ENCODE measurements at regions of chr17 and their contacts with region 1.

Region 1: DNA sequence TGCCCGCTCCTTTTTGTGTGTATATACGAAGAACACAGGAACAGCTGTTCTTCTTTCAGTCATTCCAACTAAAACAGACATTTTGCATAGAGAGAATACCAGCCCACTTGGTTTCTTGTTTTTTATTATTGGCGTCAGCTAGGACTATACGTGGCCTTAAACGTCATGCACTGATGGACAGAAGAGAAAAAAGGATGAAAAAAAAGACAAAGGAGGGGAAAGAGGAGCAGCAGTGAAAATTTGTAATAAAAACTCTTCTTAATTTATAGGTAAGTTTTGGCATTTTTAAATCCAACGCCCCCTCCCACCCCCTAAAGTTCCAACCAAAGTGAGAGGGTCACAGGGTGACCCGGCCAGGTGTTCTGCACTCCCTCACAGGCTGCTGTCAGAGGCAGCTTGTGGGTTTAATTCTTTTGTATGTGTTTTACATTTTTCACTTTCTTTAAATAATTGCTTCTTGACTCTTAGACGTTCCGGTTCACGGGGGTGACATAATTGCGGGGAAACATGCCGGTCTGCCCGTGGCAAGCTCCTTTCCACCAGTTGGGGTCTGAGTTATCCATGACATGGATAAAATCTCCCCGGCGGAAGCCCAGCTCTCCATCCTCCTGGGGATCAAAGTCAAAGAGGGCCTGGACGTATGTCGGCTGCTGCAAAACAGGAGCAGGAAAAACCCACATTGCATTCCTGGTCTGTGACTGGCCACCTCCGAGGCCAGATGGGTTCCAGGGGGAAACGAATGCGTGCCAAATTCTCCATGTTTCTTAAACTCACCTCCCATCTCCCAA is 30.9 kb upstream of the SLC25A19 start:
- DNase-seq: no peak
- ATAC-seq: peak; percentile 67
- H3K4me3 ChIP-seq: peak overlapping the region; percentile 59; the same call in 1 of the 2 replicates
- H3K27ac ChIP-seq: peak overlapping the region; percentile 85
- H3K4me1 ChIP-seq: peaks cover 76% of the 10 kb centered on the region
- H3K27me3 ChIP-seq: no peaks in the 10 kb centered on the region
- CTCF ChIP-seq: no peak
- EP300 ChIP-seq: peak; percentile 63 to 75; a peak in 3 of 4 replicates
- POLR2A ChIP-seq: no peak; the same call in 1 of the 2 replicates
- RAD21 ChIP-seq: no peak; the same call in 1 of the 2 replicates

Region 2: DNA sequence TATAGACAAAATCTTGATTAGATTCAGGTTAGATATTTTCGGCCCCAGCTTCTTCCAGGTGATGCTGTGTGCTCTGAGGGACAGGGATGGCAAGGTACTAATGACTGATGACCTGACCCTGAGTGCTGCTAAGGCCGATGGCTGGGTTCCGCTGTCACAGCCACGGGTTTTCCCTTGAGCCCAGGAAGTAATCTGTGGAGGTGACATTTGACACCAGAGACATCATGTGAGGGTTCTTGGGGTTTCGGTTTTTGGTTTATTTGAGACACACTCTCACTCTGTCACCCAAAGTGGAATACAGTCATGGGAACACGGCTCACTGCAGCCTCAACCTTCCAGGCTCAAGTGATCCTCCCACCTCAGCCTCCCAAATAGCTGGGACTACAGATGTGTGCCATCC is 374.6 kb before region 1 on chr17:
- CTCF ChIA-PET with region 1: no interaction called
- POLR2A ChIA-PET with region 1: no interaction called
- RAD21 ChIA-PET with region 1: no interaction called
- SMC1A ChIA-PET with region 1: no interaction called
- in situ Hi-C with region 1: no loop called
- intact Hi-C with region 1: no loop called
- DNase-seq: peak; percentile 48
- ATAC-seq: peak; percentile 97
- H3K4me3 ChIP-seq: peak overlapping the region; percentile 12; the same call in 1 of the 2 replicates
- H3K27ac ChIP-seq: no peak overlapping the region
- H3K4me1 ChIP-seq: peaks cover 6% of the 10 kb centered on the region; the same call in 1 of the 2 replicates
- H3K27me3 ChIP-seq: no peaks in the 10 kb centered on the region; a peak in 1 of 4 replicates
- CTCF ChIP-seq: no peak
- EP300 ChIP-seq: no peak
- POLR2A ChIP-seq: peak; percentile 52; the same call in 1 of the 2 replicates
- RAD21 ChIP-seq: no peak

Region 3: DNA sequence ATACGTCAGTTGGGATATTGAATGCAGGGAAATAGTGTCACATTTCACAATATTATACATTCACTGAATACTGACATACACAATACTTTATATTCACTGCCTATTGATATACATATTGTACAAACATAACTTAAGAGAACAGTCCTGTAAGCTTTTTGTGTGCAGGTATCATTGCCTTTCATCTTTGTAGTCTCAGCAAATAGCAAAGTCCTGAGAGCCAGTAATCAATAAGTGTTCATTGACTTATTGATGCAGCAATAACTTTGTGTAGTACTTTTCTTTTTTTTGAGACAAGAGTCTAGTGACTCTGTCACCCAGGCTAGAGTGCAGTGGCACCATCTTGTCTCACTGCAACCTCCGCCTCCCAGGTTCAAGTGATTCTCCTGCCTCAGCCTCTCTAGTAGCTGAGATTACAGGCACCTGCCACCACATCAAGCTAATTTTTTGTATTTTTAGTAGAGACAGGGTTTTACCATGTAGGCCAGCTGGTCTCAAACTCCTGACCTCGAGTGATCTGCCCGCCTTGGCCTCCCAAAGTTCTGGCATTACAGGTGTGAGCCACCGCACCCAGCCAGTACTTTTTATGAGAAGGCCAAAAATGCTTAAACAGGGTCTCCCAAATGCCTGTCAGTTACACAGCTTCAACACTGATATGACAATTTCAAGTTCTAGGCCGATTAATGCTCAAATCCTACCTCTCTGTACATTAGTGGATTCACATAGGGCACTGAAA is 120.0 kb before region 1 on chr17:
- CTCF ChIA-PET with region 1: no interaction called
- POLR2A ChIA-PET with region 1: no interaction called
- RAD21 ChIA-PET with region 1: no interaction called
- SMC1A ChIA-PET with region 1: no interaction called
- in situ Hi-C with region 1: no loop called
- intact Hi-C with region 1: no loop called
- DNase-seq: no peak
- ATAC-seq: no peak
- H3K4me3 ChIP-seq: no peak overlapping the region
- H3K27ac ChIP-seq: no peak overlapping the region
- H3K4me1 ChIP-seq: no peaks in the 10 kb centered on the region; the same call in 1 of the 2 replicates
- H3K27me3 ChIP-seq: no peaks in the 10 kb centered on the region
- CTCF ChIP-seq: no peak
- EP300 ChIP-seq: no peak
- POLR2A ChIP-seq: no peak
- RAD21 ChIP-seq: no peak

Region 4: DNA sequence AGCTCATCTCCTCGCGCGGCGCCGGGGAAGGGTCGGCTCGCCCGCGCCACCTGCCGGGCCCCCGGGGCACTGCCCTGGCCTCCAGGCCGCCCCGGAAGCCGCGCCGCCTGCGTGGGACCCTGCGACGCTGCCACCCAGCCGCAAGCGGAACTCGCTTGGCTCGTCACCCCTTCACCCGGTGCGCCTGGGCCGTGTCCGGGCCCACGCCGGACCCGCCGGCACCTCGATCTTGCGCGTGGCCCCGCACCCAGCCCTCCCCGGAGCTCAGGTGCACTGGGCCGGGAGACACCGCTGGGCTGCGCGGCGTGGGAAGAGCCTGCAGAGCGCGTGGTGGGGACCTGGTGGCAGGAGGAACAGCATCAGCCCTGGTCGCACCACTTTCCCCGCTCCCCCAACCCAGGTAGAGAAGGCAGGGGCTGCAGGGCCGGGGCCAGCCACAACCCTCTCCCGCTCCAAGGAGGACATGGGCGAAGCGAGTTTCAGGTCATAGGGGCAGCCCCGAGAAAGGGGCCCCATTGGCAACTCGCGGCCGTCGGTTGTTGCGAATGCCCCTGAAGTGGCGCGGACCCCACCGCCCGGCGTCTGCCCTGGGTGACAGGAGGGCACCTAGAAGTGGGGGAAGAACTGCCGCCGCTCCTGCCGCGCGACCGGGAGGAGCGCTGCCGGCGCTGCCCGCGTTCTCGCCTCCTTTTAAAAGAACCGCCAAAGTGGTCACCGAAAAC is 48.7 kb before region 1 on chr17:
- CTCF ChIA-PET with region 1: interaction called, 14 read pairs
- POLR2A ChIA-PET with region 1: interaction called, 4 read pairs
- RAD21 ChIA-PET with region 1: interaction called, 15 read pairs
- SMC1A ChIA-PET with region 1: interaction called, 7 read pairs
- in situ Hi-C with region 1: no loop called
- intact Hi-C with region 1: no loop called
- DNase-seq: no peak
- ATAC-seq: peak; percentile 82
- H3K4me3 ChIP-seq: peak overlapping the region; percentile 70
- H3K27ac ChIP-seq: peak overlapping the region; percentile 91
- H3K4me1 ChIP-seq: peaks cover 24% of the 10 kb centered on the region
- H3K27me3 ChIP-seq: no peaks in the 10 kb centered on the region
- CTCF ChIP-seq: peak; percentile 66 to 87 (median 79); a peak in 4 of 6 replicates
- EP300 ChIP-seq: no peak
- POLR2A ChIP-seq: peak; percentile 79
- RAD21 ChIP-seq: peak; percentile 40; the same call in 1 of the 2 replicates

Region 5: DNA sequence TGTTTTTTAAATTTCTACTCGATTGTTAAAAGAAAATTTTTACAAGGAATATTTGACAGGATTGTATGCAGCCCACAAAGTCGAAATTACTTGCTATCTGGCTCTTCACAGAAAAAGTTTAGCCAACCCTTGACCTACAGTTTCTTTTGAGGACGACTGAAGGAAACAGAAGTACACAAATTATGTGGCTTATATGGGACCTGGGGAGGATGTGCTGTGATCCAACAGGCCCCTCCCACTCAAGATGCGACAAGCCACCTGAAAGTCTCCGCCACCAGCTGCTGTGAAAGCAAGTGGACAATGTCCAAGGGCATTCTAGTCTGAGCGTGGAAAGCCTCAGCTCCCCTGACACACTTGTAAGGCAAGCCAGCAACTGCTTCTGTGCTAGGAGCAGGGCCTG is 11.6 kb after region 1 on chr17:
- CTCF ChIA-PET with region 1: interaction called, 182 read pairs
- POLR2A ChIA-PET with region 1: interaction called, 11 read pairs
- RAD21 ChIA-PET with region 1: interaction called, 5 read pairs
- SMC1A ChIA-PET with region 1: interaction called, 54 read pairs
- in situ Hi-C with region 1: no loop called
- intact Hi-C with region 1: no loop called
- DNase-seq: no peak
- ATAC-seq: no peak
- H3K4me3 ChIP-seq: no peak overlapping the region
- H3K27ac ChIP-seq: no peak overlapping the region
- H3K4me1 ChIP-seq: peaks cover 7% of the 10 kb centered on the region
- H3K27me3 ChIP-seq: no peaks in the 10 kb centered on the region
- CTCF ChIP-seq: no peak
- EP300 ChIP-seq: no peak
- POLR2A ChIP-seq: no peak
- RAD21 ChIP-seq: no peak

Region 6: DNA sequence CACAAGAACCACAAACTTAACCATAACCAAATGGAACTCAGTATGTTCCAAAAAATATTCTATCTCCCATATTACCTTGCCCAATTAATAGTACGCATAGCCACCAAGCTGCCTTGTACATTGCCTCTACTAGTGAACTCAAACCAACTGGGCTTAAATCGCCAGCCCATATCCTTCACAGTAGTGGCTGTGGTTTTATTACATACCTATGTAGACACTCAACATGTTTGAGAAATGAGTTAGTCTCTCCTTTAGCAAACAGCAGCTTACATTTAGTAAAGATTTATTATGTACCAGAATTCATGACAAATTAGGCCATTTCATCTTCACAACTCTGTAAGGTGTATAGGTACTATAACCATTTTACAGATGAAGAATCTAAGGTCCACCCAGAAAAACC is 44.0 kb after region 1 on chr17:
- CTCF ChIA-PET with region 1: interaction called, 9 read pairs
- POLR2A ChIA-PET with region 1: interaction called, 8 read pairs
- RAD21 ChIA-PET with region 1: interaction called, 8 read pairs
- SMC1A ChIA-PET with region 1: interaction called, 27 read pairs
- in situ Hi-C with region 1: no loop called
- intact Hi-C with region 1: no loop called
- DNase-seq: no peak
- ATAC-seq: no peak
- H3K4me3 ChIP-seq: no peak overlapping the region
- H3K27ac ChIP-seq: peak overlapping the region; percentile 54; the same call in 1 of the 2 replicates
- H3K4me1 ChIP-seq: peaks cover 64% of the 10 kb centered on the region
- H3K27me3 ChIP-seq: no peaks in the 10 kb centered on the region
- CTCF ChIP-seq: no peak
- EP300 ChIP-seq: no peak
- POLR2A ChIP-seq: no peak
- RAD21 ChIP-seq: no peak

Region 7: GRCh38 chr17:75393523-75394331 is 73.6 kb after region 1 on chr17:
- CTCF ChIA-PET with region 1: interaction called, 69 read pairs
- POLR2A ChIA-PET with region 1: interaction called, 11 read pairs
- RAD21 ChIA-PET with region 1: interaction called, 22 read pairs
- SMC1A ChIA-PET with region 1: interaction called, 115 read pairs
- in situ Hi-C with region 1: no loop called
- intact Hi-C with region 1: no loop called
- DNase-seq: peak; percentile 79
- ATAC-seq: peak; percentile 95
- H3K4me3 ChIP-seq: peak overlapping the region; percentile 77
- H3K27ac ChIP-seq: peak overlapping the region; percentile 57
- H3K4me1 ChIP-seq: peaks cover 21% of the 10 kb centered on the region
- H3K27me3 ChIP-seq: no peaks in the 10 kb centered on the region
- CTCF ChIP-seq: 0 out of 6 replicates have a peak, but pooled peaks of 1 of the 3 experiments have one; percentile 3
- EP300 ChIP-seq: no peak
- POLR2A ChIP-seq: peak; percentile 51; the same call in 1 of the 2 replicates
- RAD21 ChIP-seq: no peak

Region 8: DNA sequence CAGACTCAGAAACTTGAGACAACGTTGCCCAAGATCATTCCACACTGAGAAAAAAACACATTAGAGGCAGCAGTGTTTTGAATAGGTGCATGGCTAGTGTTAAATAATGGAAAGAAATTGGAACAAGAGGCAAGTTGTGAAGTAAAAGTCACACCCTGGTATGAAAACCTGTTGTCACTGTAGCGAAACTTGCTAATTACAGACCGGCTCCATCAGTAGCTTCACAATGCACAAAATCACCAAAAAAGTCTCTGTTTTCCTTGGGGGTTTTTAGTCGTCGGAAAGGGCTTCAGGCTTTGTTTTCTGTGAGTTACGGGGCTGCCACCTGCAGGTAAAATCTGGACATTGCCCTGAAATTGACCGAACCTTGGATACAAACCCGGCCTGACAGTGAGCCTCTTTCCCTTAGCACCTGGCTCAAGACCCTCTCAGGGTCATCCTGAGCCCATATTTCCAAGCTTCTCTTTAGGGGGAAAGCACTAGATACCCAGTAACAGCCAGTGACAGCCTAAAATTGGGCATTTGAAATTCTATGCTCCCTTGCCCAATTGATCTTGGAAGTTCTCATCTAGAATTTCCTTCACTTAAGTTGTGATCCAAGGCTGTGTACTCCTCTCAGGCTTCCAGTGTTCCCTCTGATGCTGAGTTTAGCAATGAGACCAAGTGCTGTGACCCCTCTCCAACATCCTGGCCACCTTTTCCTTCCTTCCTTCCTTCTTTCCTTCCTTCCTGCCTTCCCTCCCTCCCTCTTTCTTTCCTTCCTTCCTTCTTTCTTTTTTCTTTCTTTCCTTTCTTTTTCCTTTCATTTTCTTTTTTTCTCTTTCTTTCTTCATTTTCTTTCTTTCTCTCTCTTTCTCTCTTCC is 92.6 kb after region 1 on chr17:
- CTCF ChIA-PET with region 1: interaction called, 52 read pairs
- POLR2A ChIA-PET with region 1: interaction called, 7 read pairs
- RAD21 ChIA-PET with region 1: interaction called, 46 read pairs
- SMC1A ChIA-PET with region 1: interaction called, 31 read pairs
- in situ Hi-C with region 1: no loop called
- intact Hi-C with region 1: no loop called
- DNase-seq: no peak
- ATAC-seq: peak; percentile 93
- H3K4me3 ChIP-seq: no peak overlapping the region
- H3K27ac ChIP-seq: peak overlapping the region; percentile 20
- H3K4me1 ChIP-seq: peaks cover 15% of the 10 kb centered on the region
- H3K27me3 ChIP-seq: no peaks in the 10 kb centered on the region
- CTCF ChIP-seq: peak; percentile 73 to 89 (median 85)
- EP300 ChIP-seq: no peak
- POLR2A ChIP-seq: no peak
- RAD21 ChIP-seq: peak; percentile 94